Head of caudate nucleus (tissue), 42 donors: ENCODE measurements at regions of chr7 and their contacts with region 1.

Region 1: DNA sequence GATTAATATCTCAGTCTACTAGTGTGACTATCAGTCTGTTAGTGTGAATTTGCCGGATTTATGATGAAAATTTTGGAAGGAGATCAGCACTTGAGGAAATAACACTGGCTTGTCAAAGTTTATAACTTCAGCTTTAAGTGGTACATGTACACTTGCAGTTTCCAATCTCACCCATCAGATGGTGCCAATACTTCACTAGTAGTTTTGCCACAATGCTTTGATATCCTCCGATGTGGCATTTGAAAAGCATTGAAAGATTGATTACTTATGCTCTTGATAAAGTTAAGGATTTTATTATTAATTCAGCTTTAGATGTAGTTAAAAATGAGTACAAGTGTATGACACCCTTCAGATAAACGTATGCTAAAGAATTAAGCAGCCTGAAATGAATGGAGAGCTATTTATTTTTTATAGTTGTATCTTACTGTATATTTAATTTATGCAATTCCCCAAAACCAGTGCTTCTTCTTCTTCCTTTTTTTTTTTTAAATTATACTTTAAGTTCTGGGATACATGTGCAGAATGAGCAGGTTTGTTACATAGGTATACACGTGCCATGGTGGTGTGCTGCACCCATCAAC is 98.2 kb downstream of the ANLN start:
- DNase-seq: peak in 18 of 42 donors; percentile 20 to 80 (median 56)

Region 2: GRCh38 chr7:36670585-36671431 is 183.0 kb after region 1 on chr7:
- intact Hi-C with region 1: loop called (anchors 5 kb)
- DNase-seq: peak in 41 of 42 donors; percentile 25 to 89 (median 72)